Endothelial cell of umbilical vein (primary cell): ENCODE measurements at regions of chr2 and their contacts with region 1.

Region 1: GRCh38 chr2:42141687-42142546 is 27.2 kb upstream of the EML4 start:
- DNase-seq: peak; percentile 81
- H3K4me3 ChIP-seq: peak overlapping the region; percentile 3 to 61 (median 30)
- H3K27ac ChIP-seq: peak overlapping the region; percentile 86
- H3K4me1 ChIP-seq: peaks cover 30% of the 10 kb centered on the region
- H3K27me3 ChIP-seq: no peaks in the 10 kb centered on the region
- CTCF ChIP-seq: no peak
- POLR2A ChIP-seq: no peak

Region 2: GRCh38 chr2:42101206-42102023 is 40.5 kb before region 1 on chr2:
- CTCF ChIA-PET with region 1: interaction called, 6 read pairs
- POLR2A ChIA-PET with region 1: no interaction called
- dilution Hi-C with region 1: no loop called
- intact Hi-C with region 1: loop called (anchors 1 kb)
- DNase-seq: peak; percentile 42
- H3K4me3 ChIP-seq: peak overlapping the region in 1 of 3 experiments; percentile 35
- H3K27ac ChIP-seq: no peak overlapping the region
- H3K4me1 ChIP-seq: peaks cover 8% of the 10 kb centered on the region
- H3K27me3 ChIP-seq: peaks cover 0 to 3% of the 10 kb centered on the region in 2 experiments
- CTCF ChIP-seq: no peak
- POLR2A ChIP-seq: no peak

Region 3: DNA sequence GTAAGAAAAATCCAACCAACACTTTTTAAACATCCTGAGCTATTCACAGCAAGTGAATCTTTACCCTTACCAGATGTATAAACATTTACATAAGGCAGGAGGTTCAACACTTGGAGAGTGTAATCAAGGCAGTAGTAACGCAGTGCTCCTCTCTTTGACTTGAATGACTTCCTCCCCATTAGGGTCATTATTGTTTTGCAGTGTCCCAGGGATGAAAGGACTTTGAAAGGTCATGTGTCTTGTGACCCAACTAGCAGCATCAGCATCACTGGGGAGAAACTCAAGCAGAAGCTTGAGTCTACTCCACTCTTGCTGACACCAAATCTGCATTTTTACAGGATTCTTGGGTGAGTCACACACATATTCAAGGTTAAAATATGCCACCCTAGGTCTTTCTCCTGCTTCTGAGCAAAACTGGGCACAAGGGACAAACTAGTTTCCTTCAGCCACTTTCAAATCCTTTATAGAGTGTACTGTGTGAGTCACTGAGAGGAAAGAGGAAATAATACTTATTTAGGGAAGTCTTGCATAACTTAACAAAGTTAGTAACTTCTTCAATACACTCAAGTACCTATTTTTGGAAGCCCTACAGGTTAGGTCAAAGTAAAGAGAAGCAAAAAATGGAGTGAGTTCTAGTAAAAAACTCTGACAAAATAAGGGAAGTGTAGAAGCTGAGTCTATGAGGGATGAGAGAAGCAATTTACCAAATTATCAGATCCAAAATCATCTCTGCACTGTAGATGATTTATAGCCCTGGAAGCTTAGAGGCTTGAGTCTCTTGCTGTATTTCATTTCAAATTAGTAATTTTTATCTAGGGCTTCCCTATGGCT is 23.8 kb before region 1 on chr2:
- CTCF ChIA-PET with region 1: no interaction called
- POLR2A ChIA-PET with region 1: no interaction called
- dilution Hi-C with region 1: no loop called
- intact Hi-C with region 1: no loop called
- DNase-seq: peak; percentile 57
- H3K4me3 ChIP-seq: no peak overlapping the region
- H3K27ac ChIP-seq: no peak overlapping the region
- H3K4me1 ChIP-seq: peaks cover 18% of the 10 kb centered on the region
- H3K27me3 ChIP-seq: peaks cover 4 to 5% of the 10 kb centered on the region in 2 experiments
- CTCF ChIP-seq: no peak
- POLR2A ChIP-seq: no peak

Region 4: GRCh38 chr2:42169100-42169873 is 27.4 kb after region 1 on chr2 and contains the start of gene EML4:
- CTCF ChIA-PET with region 1: interaction called, 7 read pairs
- POLR2A ChIA-PET with region 1: no interaction called
- dilution Hi-C with region 1: no loop called
- intact Hi-C with region 1: loop called (anchors 2 kb)
- DNase-seq: peak; percentile 84
- H3K4me3 ChIP-seq: peak within 1 kb of the TSS; percentile 72 to 76 (median 75)
- H3K27ac ChIP-seq: peak within 1 kb of the TSS; percentile 78
- H3K4me1 ChIP-seq: peaks cover 7% of the 10 kb centered on the region
- H3K27me3 ChIP-seq: peaks cover 6 to 7% of the 10 kb centered on the region in 2 experiments
- CTCF ChIP-seq: no peak
- POLR2A ChIP-seq: peak; percentile 80
- total RNA-seq, gene EML4: 30.8 and 32.0 TPM in 2 replicates